ENCODE measurements at regions of chr6 and their contacts with region 1.

Region 1: DNA sequence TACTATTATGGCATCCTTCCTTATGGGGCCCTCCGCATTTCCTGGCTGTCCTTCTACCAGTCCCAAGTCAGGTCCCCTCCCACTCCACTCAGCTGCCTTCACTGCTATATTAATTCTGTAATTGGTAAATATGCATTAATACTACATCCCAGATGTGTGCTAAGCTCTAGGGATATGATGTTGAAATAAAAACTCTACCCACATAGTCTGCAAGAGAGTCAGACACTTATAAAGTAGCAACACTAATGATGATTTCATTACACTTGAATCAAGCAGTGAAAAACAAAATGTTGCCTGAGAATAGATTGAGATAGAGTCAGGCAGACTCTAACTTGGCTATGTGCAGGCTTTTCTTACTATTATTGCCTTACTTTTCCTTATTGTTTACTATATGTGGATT is 62.4 kb downstream of the AIG1 start:
- DNase-seq: no peak
- ATAC-seq: no peak
- H3K4me3 ChIP-seq: no peak overlapping the region
- H3K27ac ChIP-seq: no peak overlapping the region
- H3K4me1 ChIP-seq: no peaks in the 10 kb centered on the region
- H3K27me3 ChIP-seq: no peaks in the 10 kb centered on the region
- CTCF ChIP-seq: no peak

Region 2: GRCh38 chr6:143215363-143215762 is 92.3 kb after region 1 on chr6:
- CTCF ChIA-PET with region 1: no interaction called
- POLR2A ChIA-PET with region 1: no interaction called
- intact Hi-C with region 1: no loop called
- DNase-seq: peak; percentile 49
- ATAC-seq: peak; percentile 86
- H3K4me3 ChIP-seq: no peak overlapping the region
- H3K27ac ChIP-seq: no peak overlapping the region
- H3K4me1 ChIP-seq: peaks cover 12% of the 10 kb centered on the region
- H3K27me3 ChIP-seq: no peaks in the 10 kb centered on the region
- CTCF ChIP-seq: no peak

Region 3: DNA sequence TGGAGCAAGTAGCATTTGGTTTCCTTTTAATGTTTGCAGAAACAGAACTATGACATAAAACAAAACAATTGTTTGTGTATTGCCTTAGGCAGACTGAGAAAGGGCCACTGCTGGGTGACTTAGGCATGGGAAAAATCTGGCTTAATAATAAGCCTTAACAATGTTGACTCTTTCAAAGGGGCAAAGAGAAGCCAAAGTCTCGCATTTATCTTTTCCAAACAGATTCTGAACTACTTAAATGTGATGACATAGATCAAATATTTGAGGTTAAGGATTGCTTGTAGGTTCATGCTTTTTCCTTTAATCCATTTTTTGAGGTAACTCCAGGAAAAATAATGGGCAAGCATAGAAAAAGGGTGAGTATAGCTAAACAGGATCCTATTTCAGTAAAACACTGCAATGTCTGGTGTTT is 287.8 kb after region 1 on chr6:
- CTCF ChIA-PET with region 1: no interaction called
- POLR2A ChIA-PET with region 1: interaction called, 13 read pairs
- intact Hi-C with region 1: no loop called
- DNase-seq: peak; percentile 88
- ATAC-seq: peak; percentile 70
- H3K4me3 ChIP-seq: no peak overlapping the region
- H3K27ac ChIP-seq: peak overlapping the region; percentile 100
- H3K4me1 ChIP-seq: peaks cover 49% of the 10 kb centered on the region
- H3K27me3 ChIP-seq: no peaks in the 10 kb centered on the region
- CTCF ChIP-seq: no peak